ENCODE measurements at regions of chr4 and their contacts with region 1.

Region 1: GRCh38 chr4:74023709-74024108 is 14.8 kb downstream of the CXCL3 start:
- DNase-seq: no peak
- ATAC-seq: no peak
- H3K4me3 ChIP-seq: no peak overlapping the region
- H3K4me3 Mint-ChIP-seq: no peak overlapping the region
- H3K27ac ChIP-seq: no peak overlapping the region
- H3K27ac Mint-ChIP-seq: no peak overlapping the region
- H3K4me1 ChIP-seq: no peaks in the 10 kb centered on the region
- H3K4me1 Mint-ChIP-seq: peaks cover 0 to 2% (median 0%) of the 10 kb centered on the region in 7 donors
- H3K27me3 ChIP-seq: no peaks in the 10 kb centered on the region
- H3K27me3 Mint-ChIP-seq: peaks cover 0 to 11% (median 0%) of the 10 kb centered on the region in 5 donors

Region 2: DNA sequence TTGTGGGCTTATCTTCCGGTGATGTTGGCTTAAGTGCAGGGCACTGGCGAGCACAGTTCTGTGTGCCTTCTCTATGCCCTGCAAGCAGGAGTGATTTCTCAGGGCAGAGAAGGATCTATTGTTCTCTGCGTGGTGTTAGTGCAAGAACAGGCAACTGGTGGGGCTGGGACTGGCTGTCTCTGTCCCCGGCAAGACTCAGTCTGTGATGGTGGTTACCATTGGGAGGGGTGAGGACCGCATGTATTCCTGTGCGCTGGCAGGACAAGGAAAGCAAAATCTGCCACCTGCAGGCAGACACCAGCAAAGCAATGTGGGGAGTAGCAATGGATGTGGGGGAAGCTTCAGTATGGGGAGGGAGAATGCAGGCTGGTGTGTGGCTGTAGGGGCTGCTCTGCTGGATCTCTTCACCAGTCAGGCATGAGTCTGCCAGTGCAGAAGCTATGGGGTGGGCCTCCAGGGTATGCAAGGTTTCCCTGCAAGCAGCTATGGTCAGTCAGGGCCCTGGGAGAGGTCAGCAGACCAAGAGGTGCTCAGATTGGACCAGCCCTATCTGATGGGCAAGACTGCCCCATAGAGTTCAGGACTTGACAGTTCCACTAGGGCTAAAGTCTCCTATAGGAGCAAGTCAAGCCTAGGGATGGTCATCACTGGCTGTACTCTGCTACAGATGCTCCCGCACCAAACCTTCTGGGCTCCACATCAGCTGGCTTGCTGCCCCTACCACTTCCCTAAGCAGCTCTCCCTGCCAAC is 58.7 kb before region 1 on chr4:
- CTCF ChIA-PET with region 1: no interaction called
- POLR2A ChIA-PET with region 1: no interaction called
- intact Hi-C with region 1: loop called in 1 of 2 experiments (anchors 10 kb)
- DNase-seq: no peak
- ATAC-seq: no peak
- H3K4me3 ChIP-seq: no peak overlapping the region
- H3K4me3 Mint-ChIP-seq: no peak overlapping the region
- H3K27ac ChIP-seq: no peak overlapping the region
- H3K27ac Mint-ChIP-seq: no peak overlapping the region
- H3K4me1 ChIP-seq: no peaks in the 10 kb centered on the region
- H3K4me1 Mint-ChIP-seq: no peaks in the 10 kb centered on the region
- H3K27me3 ChIP-seq: no peaks in the 10 kb centered on the region
- H3K27me3 Mint-ChIP-seq: peaks cover 0 to 7% (median 0%) of the 10 kb centered on the region in 5 donors

Region 3: GRCh38 chr4:74012130-74012529 is 11.6 kb before region 1 on chr4:
- CTCF ChIA-PET with region 1: no interaction called
- POLR2A ChIA-PET with region 1: no interaction called
- intact Hi-C with region 1: no loop called
- DNase-seq: no peak
- ATAC-seq: peak; percentile 18
- H3K4me3 ChIP-seq: no peak overlapping the region
- H3K4me3 Mint-ChIP-seq: no peak overlapping the region
- H3K27ac ChIP-seq: no peak overlapping the region
- H3K27ac Mint-ChIP-seq: no peak overlapping the region
- H3K4me1 ChIP-seq: no peaks in the 10 kb centered on the region
- H3K4me1 Mint-ChIP-seq: peaks cover 0 to 16% (median 0%) of the 10 kb centered on the region in 7 donors
- H3K27me3 ChIP-seq: no peaks in the 10 kb centered on the region
- H3K27me3 Mint-ChIP-seq: peaks cover 0 to 14% (median 7%) of the 10 kb centered on the region in 5 donors

Region 4: GRCh38 chr4:74311696-74312313 is 288.1 kb after region 1 on chr4:
- CTCF ChIA-PET with region 1: no interaction called
- POLR2A ChIA-PET with region 1: no interaction called
- intact Hi-C with region 1: no loop called
- DNase-seq: peak in 7 of 9 donors; percentile 27 to 57 (median 48)
- ATAC-seq: peak; percentile 63
- H3K4me3 ChIP-seq: no peak overlapping the region
- H3K4me3 Mint-ChIP-seq: no peak overlapping the region
- H3K27ac ChIP-seq: no peak overlapping the region
- H3K27ac Mint-ChIP-seq: no peak overlapping the region
- H3K4me1 ChIP-seq: peaks cover 0 to 11% of the 10 kb centered on the region in 2 donors
- H3K4me1 Mint-ChIP-seq: peaks cover 7 to 20% (median 17%) of the 10 kb centered on the region in 7 donors
- H3K27me3 ChIP-seq: no peaks in the 10 kb centered on the region
- H3K27me3 Mint-ChIP-seq: no peaks in the 10 kb centered on the region

Measured in naive thymus-derived CD4-positive, alpha-beta T cell (primary cell).